PC-9 (cell line): ENCODE measurements at regions of chr3 and their contacts with region 1.

Region 1: GRCh38 chr3:61015859-61016258 is 235.4 kb downstream of the FHIT start:
- DNase-seq: no peak
- H3K4me3 ChIP-seq: no peak overlapping the region
- H3K27ac ChIP-seq: no peak overlapping the region
- H3K4me1 ChIP-seq: no peaks in the 10 kb centered on the region
- H3K27me3 ChIP-seq: no peaks in the 10 kb centered on the region
- CTCF ChIP-seq: no peak

Region 2: DNA sequence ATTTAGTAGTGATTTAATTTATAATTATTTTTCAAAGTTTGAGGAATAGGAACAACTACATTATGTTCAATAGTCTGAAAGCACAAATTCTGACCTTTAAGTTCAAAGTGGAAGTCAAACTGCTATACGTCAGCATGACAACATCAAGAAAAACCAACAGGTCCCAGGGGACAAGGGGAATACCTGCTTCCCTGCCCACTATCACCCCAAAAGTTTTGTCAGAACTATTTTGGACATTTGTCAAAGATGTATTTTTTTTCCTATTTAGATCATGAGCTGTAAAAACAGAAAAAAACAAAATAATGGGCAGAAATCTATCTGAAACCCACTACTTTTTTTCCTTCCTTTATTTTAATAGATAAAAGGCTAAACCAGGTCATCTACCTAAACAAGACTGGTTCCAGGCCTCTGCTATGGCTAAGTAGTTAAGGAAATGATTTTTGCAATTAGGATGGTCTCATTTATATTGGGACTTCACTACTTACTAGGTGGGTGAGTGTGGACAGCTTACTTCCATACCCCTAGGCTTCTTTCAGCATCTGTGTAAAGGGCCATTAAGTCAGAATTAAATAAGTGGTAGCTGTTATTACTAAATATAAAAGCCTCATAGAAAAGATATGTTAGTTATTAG is 510.9 kb before region 1 on chr3:
- CTCF ChIA-PET with region 1: no interaction called
- POLR2A ChIA-PET with region 1: no interaction called
- intact Hi-C with region 1: no loop called
- DNase-seq: no peak
- H3K4me3 ChIP-seq: no peak overlapping the region
- H3K27ac ChIP-seq: no peak overlapping the region
- H3K4me1 ChIP-seq: no peaks in the 10 kb centered on the region
- H3K27me3 ChIP-seq: no peaks in the 10 kb centered on the region
- CTCF ChIP-seq: no peak

Region 3: GRCh38 chr3:61938883-61939560 is 923.2 kb after region 1 on chr3:
- CTCF ChIA-PET with region 1: interaction called, 13 read pairs
- POLR2A ChIA-PET with region 1: no interaction called
- intact Hi-C with region 1: no loop called
- DNase-seq: no peak
- H3K4me3 ChIP-seq: no peak overlapping the region
- H3K27ac ChIP-seq: no peak overlapping the region
- H3K4me1 ChIP-seq: no peaks in the 10 kb centered on the region
- H3K27me3 ChIP-seq: no peaks in the 10 kb centered on the region
- CTCF ChIP-seq: no peak